HepG2 (cell line): ENCODE measurements at regions of chr19 and their contacts with region 1.

Region 1: DNA sequence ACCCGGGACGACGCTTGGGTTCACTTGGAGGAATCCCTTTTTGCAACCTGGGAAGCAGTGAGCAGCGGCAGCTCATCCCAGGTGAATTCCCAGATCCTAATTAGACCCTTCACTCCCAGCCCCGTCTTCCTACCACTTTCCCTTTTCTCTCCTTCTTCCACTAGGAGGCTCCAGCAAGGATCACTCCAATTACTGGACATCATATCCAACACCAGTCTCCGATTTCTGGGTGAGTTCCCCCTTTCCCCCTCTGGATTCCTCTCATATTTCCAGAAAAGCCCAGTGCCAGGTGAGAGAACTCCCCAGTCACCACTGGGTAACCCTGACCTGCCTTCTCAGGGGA is 17.1 kb upstream of the ZSCAN4 start:
- DNase-seq: no peak
- ATAC-seq: peak; percentile 75
- H3K4me3 ChIP-seq: peak overlapping the region; percentile 52 to 69 (median 61)
- H3K27ac ChIP-seq: peak overlapping the region; percentile 65
- H3K4me1 ChIP-seq: peaks cover 43% of the 10 kb centered on the region
- H3K27me3 ChIP-seq: no peaks in the 10 kb centered on the region
- CTCF ChIP-seq: peak; percentile 55
- EP300 ChIP-seq: no peak
- POLR2A ChIP-seq: no peak
- RAD21 ChIP-seq: no peak

Region 2: DNA sequence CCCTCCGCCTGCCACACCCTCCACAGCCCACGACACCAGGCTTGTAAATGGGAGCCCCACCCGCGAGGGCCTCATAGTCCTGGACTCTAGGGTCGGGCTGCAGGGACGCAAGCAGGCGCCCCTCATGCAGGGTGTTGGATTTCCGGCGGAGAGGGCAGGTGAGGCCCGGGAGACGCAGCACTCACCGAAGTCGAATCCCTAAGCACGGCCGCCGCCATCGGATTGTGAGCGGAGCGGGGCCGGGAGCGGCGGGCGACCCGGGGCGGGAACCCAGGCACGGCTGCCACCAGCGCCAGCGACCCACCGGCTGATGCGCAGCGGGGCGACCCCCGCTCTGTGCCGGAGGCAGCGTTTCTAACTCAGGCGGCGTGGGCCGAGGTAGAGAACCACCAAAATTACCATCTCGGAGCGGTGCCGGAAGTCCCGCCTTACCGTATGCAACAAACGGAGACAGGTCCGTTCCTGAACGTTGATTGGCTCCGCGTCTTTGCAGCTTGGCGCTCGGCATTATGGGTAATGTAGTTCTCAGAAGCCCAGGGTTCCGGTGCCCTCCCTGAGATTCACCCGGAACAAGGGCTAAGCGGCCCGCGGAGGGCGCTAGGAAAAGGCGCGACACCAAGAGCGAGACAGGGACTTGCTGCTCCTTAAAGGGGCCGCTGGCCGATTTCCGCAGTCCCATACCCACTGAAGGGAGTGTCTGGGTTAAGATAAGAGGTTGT is 73.0 kb before region 1 on chr19 and contains the start of gene ZNF416:
- CTCF ChIA-PET with region 1: no interaction called
- POLR2A ChIA-PET with region 1: no interaction called
- in situ Hi-C with region 1: no loop called
- intact Hi-C with region 1: no loop called
- DNase-seq: peak; percentile 97
- ATAC-seq: peak; percentile 96
- H3K4me3 ChIP-seq: peak within 1 kb of the TSS; percentile 86 to 95 (median 92)
- H3K27ac ChIP-seq: no peak within 1 kb of the TSS
- H3K4me1 ChIP-seq: peaks cover 16% of the 10 kb centered on the region
- H3K27me3 ChIP-seq: no peaks in the 10 kb centered on the region; a peak in 1 of 5 replicates
- CTCF ChIP-seq: peak; percentile 80
- EP300 ChIP-seq: no peak
- POLR2A ChIP-seq: no peak; a peak in 1 of 4 replicates
- RAD21 ChIP-seq: 0 out of 2 replicates have a peak, but pooled peaks have one; percentile 16
- total RNA-seq, gene ZNF416: 5.3 and 6.6 TPM in 2 replicates

Region 3: GRCh38 chr19:57664269-57665127 is 12.9 kb after region 1 on chr19:
- CTCF ChIA-PET with region 1: no interaction called
- POLR2A ChIA-PET with region 1: interaction called, 19 read pairs
- in situ Hi-C with region 1: no loop called
- intact Hi-C with region 1: no loop called
- DNase-seq: peak; percentile 39
- ATAC-seq: peak; percentile 97
- H3K4me3 ChIP-seq: peak overlapping the region; percentile 67 to 71 (median 70)
- H3K27ac ChIP-seq: peak overlapping the region; percentile 30
- H3K4me1 ChIP-seq: peaks cover 15% of the 10 kb centered on the region
- H3K27me3 ChIP-seq: no peaks in the 10 kb centered on the region; a peak in 1 of 5 replicates
- CTCF ChIP-seq: peak; percentile 43
- EP300 ChIP-seq: no peak
- POLR2A ChIP-seq: peak in 1 of 2 experiments; percentile 60; a peak in 1 of 4 replicates
- RAD21 ChIP-seq: peak; percentile 29; the same call in 1 of the 2 replicates